ENCODE measurements at regions of chr14 and their contacts with region 1.

Region 1: GRCh38 chr14:57863471-57863870 is 2.4 kb downstream of the SLC35F4 start:
- DNase-seq: no peak
- H3K4me3 ChIP-seq: no peak overlapping the region
- H3K27ac ChIP-seq: no peak overlapping the region
- H3K4me1 ChIP-seq: no peaks in the 10 kb centered on the region
- H3K27me3 ChIP-seq: peaks cover 14% of the 10 kb centered on the region; the same call in 1 of the 2 replicates
- CTCF ChIP-seq: no peak

Region 2: DNA sequence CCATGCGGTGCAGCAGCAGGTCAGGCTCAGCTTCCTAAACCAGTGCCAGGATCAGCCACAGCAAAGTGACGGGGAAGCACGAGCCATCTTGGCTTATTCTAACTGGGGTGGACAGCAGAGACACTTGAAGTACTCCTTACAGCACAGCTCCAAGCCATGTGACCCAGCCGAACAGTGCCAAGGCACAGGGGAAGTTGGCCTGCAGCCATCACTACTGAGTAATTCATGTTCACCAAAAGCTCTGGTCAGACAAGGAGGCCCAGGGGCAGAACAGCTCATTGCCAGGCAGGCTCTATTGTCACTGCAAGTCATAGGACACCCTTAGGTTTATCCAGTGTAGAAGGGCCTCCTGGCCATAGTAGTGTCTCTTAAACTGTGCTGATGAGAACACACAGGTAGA is 25.8 kb after region 1 on chr14:
- CTCF ChIA-PET with region 1: no interaction called
- POLR2A ChIA-PET with region 1: interaction called, 11 read pairs
- intact Hi-C with region 1: no loop called
- DNase-seq: no peak
- H3K4me3 ChIP-seq: no peak overlapping the region
- H3K27ac ChIP-seq: no peak overlapping the region
- H3K4me1 ChIP-seq: no peaks in the 10 kb centered on the region
- H3K27me3 ChIP-seq: 0 out of 2 replicates have a peak, but pooled peaks cover 3% of the 10 kb centered on the region
- CTCF ChIP-seq: no peak

Region 3: GRCh38 chr14:57909626-57910025 is 46.2 kb after region 1 on chr14:
- CTCF ChIA-PET with region 1: no interaction called
- POLR2A ChIA-PET with region 1: no interaction called
- intact Hi-C with region 1: no loop called
- DNase-seq: no peak
- H3K4me3 ChIP-seq: no peak overlapping the region
- H3K27ac ChIP-seq: no peak overlapping the region
- H3K4me1 ChIP-seq: no peaks in the 10 kb centered on the region
- H3K27me3 ChIP-seq: peaks cover 5% of the 10 kb centered on the region; the same call in 1 of the 2 replicates
- CTCF ChIP-seq: no peak

Measured in PC-9 (cell line).